Thyroid gland (tissue), 4 donors: ENCODE measurements at regions of chr6 and their contacts with region 1.

Region 1: GRCh38 chr6:116010790-116011401 is 49.8 kb downstream of the FRK start:
- DNase-seq: peak; percentile 65 to 78
- H3K4me3 ChIP-seq: no peak overlapping the region
- H3K27ac ChIP-seq: no peak overlapping the region
- H3K4me1 ChIP-seq: peaks cover 0 to 7% of the 10 kb centered on the region in 2 donors
- H3K27me3 ChIP-seq: no peaks in the 10 kb centered on the region
- CTCF ChIP-seq: peak; percentile 46 to 83 (median 60)
- POLR2A ChIP-seq: no peak

Region 2: GRCh38 chr6:115865914-115866313 is 145.0 kb before region 1 on chr6:
- intact Hi-C with region 1: no loop called
- DNase-seq: no peak
- H3K4me3 ChIP-seq: no peak overlapping the region
- H3K27ac ChIP-seq: no peak overlapping the region
- H3K4me1 ChIP-seq: no peaks in the 10 kb centered on the region
- H3K27me3 ChIP-seq: no peaks in the 10 kb centered on the region
- CTCF ChIP-seq: no peak
- POLR2A ChIP-seq: no peak

Region 3: GRCh38 chr6:116100419-116101301 is 89.8 kb after region 1 on chr6 and contains the start of gene NT5DC1:
- intact Hi-C with region 1: loop called (anchors 5 kb)
- DNase-seq: peak; percentile 88 to 89
- H3K4me3 ChIP-seq: peak within 1 kb of the TSS; percentile 68 to 80 (median 78)
- H3K27ac ChIP-seq: peak within 1 kb of the TSS; percentile 97 to 98 (median 97)
- H3K4me1 ChIP-seq: peaks cover 8 to 23% of the 10 kb centered on the region in 2 donors
- H3K27me3 ChIP-seq: no peaks in the 10 kb centered on the region
- CTCF ChIP-seq: peak in 3 of 6 experiments; percentile 16 to 22 (median 21)
- POLR2A ChIP-seq: peak; percentile 25 to 95
- total RNA-seq, gene NT5DC1: 17.5 to 35.7 (median 22.1) TPM